ENCODE measurements at regions of chr13 and their contacts with region 1.

Region 1: GRCh38 chr13:98484289-98485219 is 92.4 kb downstream of the STK24 start:
- DNase-seq: peak; percentile 77
- H3K4me3 Mint-ChIP-seq: peak overlapping the region; percentile 67
- H3K27ac Mint-ChIP-seq: peak overlapping the region; percentile 98
- H3K4me1 Mint-ChIP-seq: peaks cover 9% of the 10 kb centered on the region
- H3K27me3 Mint-ChIP-seq: no peaks in the 10 kb centered on the region
- CTCF ChIP-seq: no peak

Region 2: GRCh38 chr13:98345536-98345935 is 139.0 kb before region 1 on chr13:
- CTCF ChIA-PET with region 1: no interaction called
- intact Hi-C with region 1: no loop called
- DNase-seq: no peak
- H3K4me3 Mint-ChIP-seq: no peak overlapping the region
- H3K27ac Mint-ChIP-seq: no peak overlapping the region
- H3K4me1 Mint-ChIP-seq: no peaks in the 10 kb centered on the region
- H3K27me3 Mint-ChIP-seq: no peaks in the 10 kb centered on the region
- CTCF ChIP-seq: no peak

Region 3: GRCh38 chr13:98570929-98571372 is 86.4 kb after region 1 on chr13:
- CTCF ChIA-PET with region 1: interaction called, 4 read pairs
- intact Hi-C with region 1: loop called (anchors 5 kb)
- DNase-seq: peak; percentile 18
- H3K4me3 Mint-ChIP-seq: peak overlapping the region; percentile 58
- H3K27ac Mint-ChIP-seq: no peak overlapping the region
- H3K4me1 Mint-ChIP-seq: peaks cover 17% of the 10 kb centered on the region
- H3K27me3 Mint-ChIP-seq: no peaks in the 10 kb centered on the region
- CTCF ChIP-seq: no peak

Region 4: GRCh38 chr13:99041788-99042187 is 557.2 kb after region 1 on chr13:
- CTCF ChIA-PET with region 1: no interaction called
- intact Hi-C with region 1: no loop called
- DNase-seq: no peak
- H3K4me3 Mint-ChIP-seq: no peak overlapping the region
- H3K27ac Mint-ChIP-seq: no peak overlapping the region
- H3K4me1 Mint-ChIP-seq: no peaks in the 10 kb centered on the region
- H3K27me3 Mint-ChIP-seq: no peaks in the 10 kb centered on the region
- CTCF ChIP-seq: no peak

Measured in Calu3 (cell line).